A673 (cell line): ENCODE measurements at regions of chr16 and their contacts with region 1.

Region 1: GRCh38 chr16:65446427-65446826 is 324.6 kb upstream of the CDH11 start:
- DNase-seq: no peak
- H3K4me3 ChIP-seq: no peak overlapping the region
- H3K27ac ChIP-seq: no peak overlapping the region
- H3K4me1 ChIP-seq: no peaks in the 10 kb centered on the region
- H3K27me3 ChIP-seq: no peaks in the 10 kb centered on the region
- CTCF ChIP-seq: no peak

Region 2: DNA sequence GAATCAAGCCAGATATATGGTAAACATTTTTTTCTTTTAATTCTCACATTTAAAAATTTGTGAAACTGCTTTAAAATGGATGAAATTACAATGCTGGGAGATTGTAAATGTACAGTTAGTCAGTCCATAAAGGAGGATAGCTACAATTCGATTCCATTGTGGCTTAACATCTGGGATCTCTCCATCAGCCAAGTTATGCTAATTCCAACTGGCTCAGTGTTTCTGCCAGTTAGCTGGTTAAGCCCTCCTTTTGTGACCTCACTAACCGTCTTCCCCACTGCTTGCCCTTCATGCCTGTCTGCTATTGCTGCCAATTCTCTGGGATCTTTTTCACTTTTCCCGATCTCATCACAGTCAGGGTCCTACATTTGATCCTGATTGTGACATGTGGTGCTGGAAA is 1672.1 kb before region 1 on chr16:
- CTCF ChIA-PET with region 1: no interaction called
- POLR2A ChIA-PET with region 1: interaction called, 13 read pairs
- intact Hi-C with region 1: no loop called
- DNase-seq: no peak
- H3K4me3 ChIP-seq: no peak overlapping the region
- H3K27ac ChIP-seq: no peak overlapping the region
- H3K4me1 ChIP-seq: no peaks in the 10 kb centered on the region
- H3K27me3 ChIP-seq: no peaks in the 10 kb centered on the region
- CTCF ChIP-seq: no peak

Region 3: GRCh38 chr16:65463652-65464260 is 17.3 kb after region 1 on chr16:
- CTCF ChIA-PET with region 1: no interaction called
- POLR2A ChIA-PET with region 1: no interaction called
- intact Hi-C with region 1: no loop called
- DNase-seq: no peak
- H3K4me3 ChIP-seq: no peak overlapping the region
- H3K27ac ChIP-seq: no peak overlapping the region
- H3K4me1 ChIP-seq: no peaks in the 10 kb centered on the region
- H3K27me3 ChIP-seq: no peaks in the 10 kb centered on the region
- CTCF ChIP-seq: no peak

Region 4: GRCh38 chr16:65667011-65667578 is 220.7 kb after region 1 on chr16:
- CTCF ChIA-PET with region 1: no interaction called
- POLR2A ChIA-PET with region 1: no interaction called
- intact Hi-C with region 1: no loop called
- DNase-seq: peak; percentile 65
- H3K4me3 ChIP-seq: no peak overlapping the region
- H3K27ac ChIP-seq: peak overlapping the region; percentile 43
- H3K4me1 ChIP-seq: peaks cover 42% of the 10 kb centered on the region
- H3K27me3 ChIP-seq: no peaks in the 10 kb centered on the region
- CTCF ChIP-seq: peak; percentile 50